H1 (cell line): ENCODE measurements at regions of chr12 and their contacts with region 1.

Region 1: DNA sequence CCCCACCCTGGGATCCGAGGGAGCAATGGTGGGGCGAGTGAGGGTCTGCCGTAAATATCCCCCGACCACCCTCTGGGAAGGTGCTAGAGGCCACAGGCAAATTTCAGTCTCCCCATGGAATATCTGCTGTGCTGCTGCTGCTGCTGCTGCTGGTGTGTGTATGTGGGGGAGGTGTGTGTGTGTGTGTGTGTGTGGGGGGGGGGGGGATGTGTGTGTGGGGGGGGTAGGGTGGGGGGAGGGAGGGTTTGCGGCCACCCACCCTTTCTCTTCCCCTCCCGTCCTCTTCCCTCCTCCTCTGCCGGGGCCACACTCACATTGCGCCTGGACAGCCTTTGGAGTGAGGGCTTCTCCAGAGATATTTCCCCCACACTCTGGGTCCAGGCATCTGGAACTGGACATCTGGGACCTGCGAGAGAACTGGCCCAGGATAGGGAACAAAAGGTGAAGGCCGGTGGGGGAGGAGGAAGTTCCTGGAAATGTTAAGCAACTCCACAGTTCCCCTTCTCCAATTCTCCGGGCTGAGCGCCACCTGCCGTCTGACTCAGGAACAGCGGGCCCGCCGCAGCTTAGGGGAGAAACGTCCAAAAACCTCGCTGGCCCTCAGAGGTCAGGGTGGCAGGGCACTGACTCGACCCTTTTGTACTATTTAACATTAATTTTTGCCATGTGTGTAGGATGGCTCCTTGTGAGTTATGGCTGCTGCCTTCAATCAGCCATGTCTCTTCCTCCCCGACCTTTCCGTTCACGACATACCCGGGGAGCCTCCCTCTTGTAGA is at the start of gene C1RL:
- DNase-seq: peak; percentile 53 to 99
- H3K4me3 ChIP-seq: peak within 1 kb of the TSS; percentile 63 to 80 (median 75)
- H3K27ac ChIP-seq: peak within 1 kb of the TSS; percentile 13; the same call in 1 of the 2 replicates
- H3K4me1 ChIP-seq: 0 out of 7 replicates have a peak, but pooled peaks cover 0 to 2% (median 0%) of the 10 kb centered on the region in 4 experiments
- H3K27me3 ChIP-seq: no peaks in the 10 kb centered on the region
- CTCF ChIP-seq: peak; percentile 82 to 95 (median 91)
- EP300 ChIP-seq: no peak
- POLR2A ChIP-seq: 0 out of 3 replicates have a peak, but pooled peaks of 1 of the 2 experiments have one; percentile 3
- RAD21 ChIP-seq: peak; percentile 66 to 79
- total RNA-seq, gene C1RL: 11.4 and 14.7 TPM in 2 replicates

Region 2: GRCh38 chr12:7031306-7031705 is 77.7 kb before region 1 on chr12:
- CTCF ChIA-PET with region 1: interaction called, 10 read pairs
- POLR2A ChIA-PET with region 1: no interaction called
- DNase-seq: no peak
- H3K4me3 ChIP-seq: no peak overlapping the region
- H3K27ac ChIP-seq: no peak overlapping the region
- H3K4me1 ChIP-seq: no peaks in the 10 kb centered on the region; a peak in 2 of 7 replicates
- H3K27me3 ChIP-seq: no peaks in the 10 kb centered on the region
- CTCF ChIP-seq: no peak
- EP300 ChIP-seq: no peak
- POLR2A ChIP-seq: no peak
- RAD21 ChIP-seq: no peak

Region 3: GRCh38 chr12:7060353-7060954 is 48.5 kb before region 1 on chr12 and contains the start of gene C1S:
- CTCF ChIA-PET with region 1: interaction called, 58 read pairs
- POLR2A ChIA-PET with region 1: interaction called, 39 read pairs
- DNase-seq: peak; percentile 36 to 63
- H3K4me3 ChIP-seq: no peak within 1 kb of the TSS
- H3K27ac ChIP-seq: no peak within 1 kb of the TSS
- H3K4me1 ChIP-seq: peaks cover 0 to 5% (median 2%) of the 10 kb centered on the region in 4 experiments; a peak in 3 of 7 replicates
- H3K27me3 ChIP-seq: no peaks in the 10 kb centered on the region
- CTCF ChIP-seq: peak; percentile 49 to 96 (median 78)
- EP300 ChIP-seq: no peak
- POLR2A ChIP-seq: no peak
- RAD21 ChIP-seq: peak; percentile 91 to 94
- total RNA-seq, gene C1S: 5.0 and 7.3 TPM in 2 replicates

Region 4: DNA sequence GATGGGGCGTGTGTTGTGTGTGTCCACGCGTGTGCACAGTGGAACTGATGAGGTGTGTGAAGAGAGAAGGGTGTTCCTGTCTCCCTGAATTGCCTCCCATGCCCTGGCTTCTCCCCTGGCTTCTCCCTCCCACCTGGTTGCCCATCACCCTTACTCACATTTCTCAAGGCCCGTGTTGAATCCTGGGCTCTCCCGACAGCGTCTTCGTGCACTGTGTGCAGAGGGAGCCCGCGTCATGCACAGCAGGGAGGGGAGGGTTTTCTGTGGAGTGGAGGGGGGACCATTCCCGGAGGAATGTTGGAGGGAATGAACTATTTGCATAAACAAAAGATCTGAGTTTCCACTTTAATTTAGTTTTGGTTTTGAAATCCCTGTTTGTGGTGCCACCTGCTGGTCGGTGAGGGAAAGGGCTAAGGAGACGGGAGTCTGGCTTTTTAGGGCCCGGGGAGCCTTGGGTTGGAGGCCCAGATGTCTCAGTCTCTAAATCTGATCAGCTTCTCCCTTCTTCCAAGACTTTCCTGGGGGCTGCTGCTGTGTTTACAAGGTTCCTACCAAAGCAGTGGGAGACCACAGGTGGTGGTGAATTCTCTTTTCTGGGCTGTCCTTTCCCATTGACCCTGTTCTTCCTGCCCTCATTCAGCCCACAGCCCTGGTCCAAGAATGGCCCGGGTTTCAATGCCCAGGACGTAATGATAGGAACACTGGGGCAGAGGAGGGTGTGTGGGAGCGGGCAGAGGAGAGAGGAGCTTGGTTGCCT is 16.6 kb before region 1 on chr12 and contains the start of gene C1R:
- CTCF ChIA-PET with region 1: interaction called, 34 read pairs
- POLR2A ChIA-PET with region 1: interaction called, 42 read pairs
- DNase-seq: peak in 1 of 2 experiments; percentile 85
- H3K4me3 ChIP-seq: peak within 1 kb of the TSS in 2 of 4 experiments; percentile 25 to 49; a peak in 2 of 8 replicates
- H3K27ac ChIP-seq: no peak within 1 kb of the TSS
- H3K4me1 ChIP-seq: peaks cover 7 to 21% (median 16%) of the 10 kb centered on the region in 4 experiments
- H3K27me3 ChIP-seq: no peaks in the 10 kb centered on the region; a peak in 1 of 7 replicates
- CTCF ChIP-seq: peak; percentile 73 to 80 (median 75)
- EP300 ChIP-seq: no peak
- POLR2A ChIP-seq: 0 out of 3 replicates have a peak, but pooled peaks of 1 of the 2 experiments have one; percentile 14
- RAD21 ChIP-seq: peak; percentile 60 to 75
- total RNA-seq, gene C1R: 6.9 and 7.7 TPM in 2 replicates

Region 5: GRCh38 chr12:7129872-7130680 is 21.1 kb after region 1 on chr12 and contains the start of gene CLSTN3:
- CTCF ChIA-PET with region 1: interaction called, 34 read pairs
- POLR2A ChIA-PET with region 1: interaction called, 25 read pairs
- DNase-seq: peak in 1 of 2 experiments; percentile 90
- H3K4me3 ChIP-seq: peak within 1 kb of the TSS; percentile 68 to 82 (median 74)
- H3K27ac ChIP-seq: no peak within 1 kb of the TSS; the same call in 1 of the 2 replicates
- H3K4me1 ChIP-seq: peaks cover 0 to 18% (median 7%) of the 10 kb centered on the region in 4 experiments; a peak in 6 of 7 replicates
- H3K27me3 ChIP-seq: peaks cover 0 to 9% (median 5%) of the 10 kb centered on the region in 4 experiments; a peak in 5 of 7 replicates
- CTCF ChIP-seq: no peak
- EP300 ChIP-seq: no peak
- POLR2A ChIP-seq: no peak; a peak in 1 of 3 replicates
- RAD21 ChIP-seq: no peak
- total RNA-seq, gene CLSTN3: 19.9 and 20.4 TPM in 2 replicates

Region 6: GRCh38 chr12:7210642-7211151 is 101.7 kb after region 1 on chr12:
- CTCF ChIA-PET with region 1: no interaction called
- POLR2A ChIA-PET with region 1: no interaction called
- DNase-seq: no peak
- H3K4me3 ChIP-seq: no peak overlapping the region
- H3K27ac ChIP-seq: no peak overlapping the region
- H3K4me1 ChIP-seq: no peaks in the 10 kb centered on the region
- H3K27me3 ChIP-seq: no peaks in the 10 kb centered on the region
- CTCF ChIP-seq: no peak
- EP300 ChIP-seq: no peak
- POLR2A ChIP-seq: no peak
- RAD21 ChIP-seq: no peak